ENCODE measurements at regions of chr10 and their contacts with region 1.

Region 1: DNA sequence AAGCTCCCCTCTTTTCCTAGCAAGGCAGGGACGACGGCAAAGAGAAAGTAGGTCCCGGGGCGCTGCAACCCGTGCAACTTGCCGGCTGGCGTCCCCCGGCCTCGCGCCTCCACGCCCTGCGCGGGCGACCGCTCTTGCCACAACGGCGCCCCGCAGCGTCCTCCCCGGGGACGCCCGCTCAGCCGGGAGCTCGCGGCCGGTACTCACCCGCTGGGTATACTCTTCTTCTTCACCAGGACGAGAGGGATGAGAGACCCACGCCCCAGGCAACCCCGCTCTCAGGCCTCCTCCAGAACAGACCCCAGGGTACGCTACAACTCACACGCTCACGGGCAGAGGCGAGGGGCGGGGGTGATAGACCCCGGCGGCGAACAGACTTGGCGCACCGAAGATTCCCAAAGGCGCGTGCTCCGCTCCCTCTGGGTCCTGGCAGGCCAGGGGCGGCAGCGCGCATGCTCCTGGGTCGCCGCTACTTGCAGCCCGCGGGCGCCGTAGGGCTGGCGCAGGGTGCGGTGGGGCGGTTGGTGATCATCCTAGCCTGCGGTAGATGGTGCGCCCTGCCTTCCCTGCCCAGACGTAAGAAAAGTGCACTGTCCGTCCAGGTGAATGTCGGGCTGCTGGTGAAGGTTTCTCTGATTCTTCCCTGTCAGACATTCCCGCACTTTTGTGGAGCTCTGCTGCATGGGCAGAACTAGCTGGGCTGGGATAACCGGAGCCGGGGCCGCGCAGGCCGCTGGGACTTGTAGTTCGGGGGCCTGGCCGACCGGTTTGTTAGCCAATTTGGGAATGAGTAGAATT is at the start of gene CC2D2B:
- DNase-seq: peak; percentile 26 to 78 (median 53)
- ATAC-seq: peak; percentile 84
- H3K4me3 ChIP-seq: peak within 1 kb of the TSS; percentile 62
- H3K4me3 Mint-ChIP-seq: peak within 1 kb of the TSS; percentile 92 to 95 (median 94)
- H3K27ac ChIP-seq: peak within 1 kb of the TSS; percentile 65
- H3K27ac Mint-ChIP-seq: peak within 1 kb of the TSS; percentile 29 to 92 (median 89)
- H3K4me1 ChIP-seq: no peaks in the 10 kb centered on the region
- H3K4me1 Mint-ChIP-seq: peaks cover 11 to 20% (median 18%) of the 10 kb centered on the region in 7 donors
- H3K27me3 ChIP-seq: no peaks in the 10 kb centered on the region
- H3K27me3 Mint-ChIP-seq: peaks cover 0 to 20% (median 0%) of the 10 kb centered on the region in 5 donors
- total RNA-seq, gene CC2D2B: 0.64 to 0.99 TPM in 2 of 5 experiments, not detected in the others

Region 2: GRCh38 chr10:94545391-94546048 is 1362.1 kb before region 1 on chr10 and contains the start of gene HELLS:
- CTCF ChIA-PET with region 1: no interaction called
- POLR2A ChIA-PET with region 1: no interaction called
- intact Hi-C with region 1: loop called (anchors 5 to 10 kb)
- DNase-seq: peak; percentile 30 to 76 (median 63)
- ATAC-seq: peak; percentile 75
- H3K4me3 ChIP-seq: peak within 1 kb of the TSS; percentile 71
- H3K4me3 Mint-ChIP-seq: peak within 1 kb of the TSS; percentile 89 to 97 (median 94)
- H3K27ac ChIP-seq: peak within 1 kb of the TSS; percentile 63
- H3K27ac Mint-ChIP-seq: peak within 1 kb of the TSS; percentile 75 to 97 (median 87)
- H3K4me1 ChIP-seq: peaks cover 3 to 8% of the 10 kb centered on the region in 2 donors
- H3K4me1 Mint-ChIP-seq: peaks cover 15 to 32% (median 26%) of the 10 kb centered on the region in 7 donors
- H3K27me3 ChIP-seq: no peaks in the 10 kb centered on the region
- H3K27me3 Mint-ChIP-seq: peaks cover 0 to 28% (median 10%) of the 10 kb centered on the region in 5 donors
- total RNA-seq, gene HELLS: 5.4 to 107 (median 7.4) TPM

Region 3: GRCh38 chr10:95864906-95865813 is 42.5 kb before region 1 on chr10:
- CTCF ChIA-PET with region 1: interaction called, 3 read pairs
- POLR2A ChIA-PET with region 1: interaction called, 3 read pairs
- intact Hi-C with region 1: loop called in 1 of 2 experiments (anchors 1 kb)
- DNase-seq: peak in 7 of 9 donors; percentile 10 to 40 (median 24)
- ATAC-seq: peak; percentile 88
- H3K4me3 ChIP-seq: no peak overlapping the region
- H3K4me3 Mint-ChIP-seq: peak overlapping the region in 1 of 10 donors; percentile 24
- H3K27ac ChIP-seq: no peak overlapping the region
- H3K27ac Mint-ChIP-seq: peak overlapping the region in 1 of 9 donors; percentile 83
- H3K4me1 ChIP-seq: no peaks in the 10 kb centered on the region
- H3K4me1 Mint-ChIP-seq: peaks cover 0 to 37% (median 0%) of the 10 kb centered on the region in 7 donors
- H3K27me3 ChIP-seq: no peaks in the 10 kb centered on the region
- H3K27me3 Mint-ChIP-seq: peaks cover 0 to 3% (median 0%) of the 10 kb centered on the region in 5 donors

Region 4: DNA sequence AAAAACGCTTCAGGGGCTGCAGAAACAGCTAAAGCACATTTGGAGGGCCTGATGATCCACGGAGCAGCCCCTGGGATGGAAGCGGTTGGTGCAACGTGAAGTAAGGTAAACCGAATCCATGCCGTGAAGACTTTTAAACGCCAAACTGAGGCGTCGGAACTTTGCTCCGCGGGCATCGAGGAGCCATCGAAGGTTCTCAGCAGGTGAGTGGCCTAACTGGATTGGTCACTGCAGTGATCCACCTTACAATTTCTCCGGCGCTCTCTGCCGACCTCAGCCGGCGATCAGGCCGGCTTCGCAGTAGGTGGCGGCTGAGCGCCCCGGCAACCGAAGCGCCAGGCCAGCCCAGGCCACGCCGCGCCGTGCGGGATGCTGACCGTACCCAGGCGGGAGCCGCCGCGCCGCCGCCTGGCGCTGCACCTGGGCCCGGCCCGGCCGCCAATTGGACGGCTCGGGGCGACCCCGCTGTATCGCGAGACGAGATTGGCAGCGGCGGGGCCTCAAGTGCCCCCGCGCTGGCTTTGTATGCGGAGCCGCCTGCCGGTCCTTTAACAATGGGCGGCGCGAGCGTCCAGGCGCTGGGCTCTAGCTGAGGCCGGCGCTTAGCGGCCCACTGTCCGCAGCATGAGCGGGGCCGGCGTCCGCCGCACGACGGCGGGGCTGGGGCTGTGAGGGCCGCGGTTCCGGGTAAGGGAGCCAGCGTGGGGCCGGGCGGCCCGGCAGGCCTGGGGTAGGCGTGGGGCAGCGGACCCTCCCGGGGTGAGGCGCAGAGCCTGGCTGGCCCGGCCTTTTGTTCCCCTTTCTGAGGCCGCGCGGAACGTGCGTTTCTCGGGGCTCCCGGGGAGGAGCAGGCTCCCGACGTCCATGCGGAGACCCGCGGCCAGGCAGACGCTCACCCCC is 135.6 kb after region 1 on chr10 and contains the start of gene CCNJ:
- CTCF ChIA-PET with region 1: no interaction called
- POLR2A ChIA-PET with region 1: no interaction called
- intact Hi-C with region 1: loop called (anchors 1 to 2 kb)
- DNase-seq: peak; percentile 76 to 87 (median 83)
- ATAC-seq: peak; percentile 91
- H3K4me3 ChIP-seq: peak within 1 kb of the TSS; percentile 78
- H3K4me3 Mint-ChIP-seq: peak within 1 kb of the TSS; percentile 83 to 96 (median 92)
- H3K27ac ChIP-seq: peak within 1 kb of the TSS; percentile 81
- H3K27ac Mint-ChIP-seq: peak within 1 kb of the TSS; percentile 80 to 96 (median 87)
- H3K4me1 ChIP-seq: peaks cover 13 to 16% of the 10 kb centered on the region in 2 donors
- H3K4me1 Mint-ChIP-seq: peaks cover 32 to 50% (median 44%) of the 10 kb centered on the region in 7 donors
- H3K27me3 ChIP-seq: peaks cover 3 to 4% of the 10 kb centered on the region in 2 donors
- H3K27me3 Mint-ChIP-seq: peaks cover 4 to 11% (median 8%) of the 10 kb centered on the region in 5 donors
- total RNA-seq, gene CCNJ: 5.6 to 8.0 (median 6.7) TPM

Measured in naive thymus-derived CD4-positive, alpha-beta T cell (primary cell).